ENCODE measurements at regions of chr11 and their contacts with region 1.

Region 1: DNA sequence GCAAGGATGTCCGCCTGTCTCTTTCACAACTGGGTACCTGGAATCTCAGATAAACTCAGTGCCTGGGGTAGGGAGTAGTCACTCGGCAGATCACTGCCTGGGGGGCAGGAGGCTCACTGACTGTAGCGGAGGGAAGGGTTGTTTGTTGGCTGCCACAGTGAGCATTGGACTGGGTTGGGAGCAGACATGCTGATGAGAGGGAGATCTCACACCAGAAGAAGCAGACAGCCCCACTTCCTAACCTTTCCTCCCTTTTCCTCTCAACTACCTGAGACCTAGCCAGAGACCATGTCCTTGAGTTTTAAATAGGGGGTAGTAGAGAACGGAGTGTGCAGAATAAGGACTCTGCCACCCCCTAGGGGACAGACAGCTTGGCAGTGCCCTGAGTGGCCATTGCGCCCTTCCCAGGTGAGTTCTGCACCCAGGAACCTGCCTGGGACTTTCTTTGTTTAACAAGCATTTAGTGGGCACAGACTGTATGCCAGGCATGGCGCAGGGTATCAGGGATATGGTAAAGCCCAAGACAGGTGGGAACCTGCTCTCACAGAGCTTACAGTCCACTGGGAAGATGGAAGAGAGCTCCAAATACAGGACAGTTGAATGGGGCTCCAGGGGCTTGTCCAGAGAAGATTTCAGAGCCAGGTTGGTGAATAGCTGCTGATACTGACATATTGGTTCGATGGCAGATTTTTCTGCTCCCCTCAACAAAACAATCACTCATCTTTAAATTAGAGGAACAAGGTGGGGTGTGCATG is 115.7 kb upstream of the NNMT start:
- DNase-seq: peak; percentile 51
- H3K4me3 ChIP-seq: no peak overlapping the region
- H3K27ac ChIP-seq: no peak overlapping the region
- H3K4me1 ChIP-seq: peaks cover 20% of the 10 kb centered on the region
- H3K27me3 ChIP-seq: no peaks in the 10 kb centered on the region
- CTCF ChIP-seq: peak; percentile 77

Region 2: DNA sequence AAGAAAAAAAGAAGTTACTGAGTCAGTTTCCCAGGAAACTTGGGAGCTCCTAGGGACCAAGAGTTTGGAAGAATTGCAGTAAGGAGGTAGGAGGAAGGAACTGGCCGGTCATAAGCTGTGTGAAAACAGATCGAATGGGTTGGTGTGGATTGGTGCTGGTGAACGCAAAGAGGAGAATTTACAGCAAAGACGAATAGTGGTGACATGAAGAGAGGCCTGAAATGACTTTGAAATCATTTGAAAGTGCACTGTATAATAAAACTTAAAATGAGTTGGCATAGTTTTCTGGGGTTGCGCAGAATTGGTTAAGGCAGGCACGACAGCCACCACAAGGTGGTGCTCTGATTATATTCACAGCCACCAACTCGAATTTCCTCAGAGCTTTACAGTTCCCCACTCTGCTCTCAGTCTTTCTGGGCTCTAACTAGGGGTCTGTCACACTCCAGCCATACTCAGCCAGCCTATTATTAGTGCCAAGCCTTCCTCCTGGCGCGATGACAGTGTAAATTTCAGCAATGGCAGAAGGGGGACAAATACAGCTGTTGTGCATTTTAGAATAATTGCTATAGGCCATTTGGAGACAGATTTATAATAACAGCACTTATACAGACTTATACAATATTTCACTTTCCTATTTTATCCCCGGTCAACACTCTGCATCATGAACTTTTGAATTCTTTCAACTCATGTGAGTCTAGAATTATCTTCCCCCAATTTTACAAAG is 284.2 kb before region 1 on chr11:
- CTCF ChIA-PET with region 1: interaction called, 7 read pairs
- POLR2A ChIA-PET with region 1: interaction called, 3 read pairs
- intact Hi-C with region 1: loop called (anchors 5 kb)
- DNase-seq: peak; percentile 67
- H3K4me3 ChIP-seq: no peak overlapping the region
- H3K27ac ChIP-seq: no peak overlapping the region
- H3K4me1 ChIP-seq: no peaks in the 10 kb centered on the region
- H3K27me3 ChIP-seq: no peaks in the 10 kb centered on the region
- CTCF ChIP-seq: peak; percentile 90

Region 3: GRCh38 chr11:114036156-114036811 is 144.2 kb before region 1 on chr11:
- CTCF ChIA-PET with region 1: no interaction called
- POLR2A ChIA-PET with region 1: no interaction called
- intact Hi-C with region 1: loop called (anchors 5 kb)
- DNase-seq: peak; percentile 66
- H3K4me3 ChIP-seq: peak overlapping the region; percentile 38
- H3K27ac ChIP-seq: no peak overlapping the region
- H3K4me1 ChIP-seq: peaks cover 11% of the 10 kb centered on the region
- H3K27me3 ChIP-seq: no peaks in the 10 kb centered on the region
- CTCF ChIP-seq: peak; percentile 89

Region 4: DNA sequence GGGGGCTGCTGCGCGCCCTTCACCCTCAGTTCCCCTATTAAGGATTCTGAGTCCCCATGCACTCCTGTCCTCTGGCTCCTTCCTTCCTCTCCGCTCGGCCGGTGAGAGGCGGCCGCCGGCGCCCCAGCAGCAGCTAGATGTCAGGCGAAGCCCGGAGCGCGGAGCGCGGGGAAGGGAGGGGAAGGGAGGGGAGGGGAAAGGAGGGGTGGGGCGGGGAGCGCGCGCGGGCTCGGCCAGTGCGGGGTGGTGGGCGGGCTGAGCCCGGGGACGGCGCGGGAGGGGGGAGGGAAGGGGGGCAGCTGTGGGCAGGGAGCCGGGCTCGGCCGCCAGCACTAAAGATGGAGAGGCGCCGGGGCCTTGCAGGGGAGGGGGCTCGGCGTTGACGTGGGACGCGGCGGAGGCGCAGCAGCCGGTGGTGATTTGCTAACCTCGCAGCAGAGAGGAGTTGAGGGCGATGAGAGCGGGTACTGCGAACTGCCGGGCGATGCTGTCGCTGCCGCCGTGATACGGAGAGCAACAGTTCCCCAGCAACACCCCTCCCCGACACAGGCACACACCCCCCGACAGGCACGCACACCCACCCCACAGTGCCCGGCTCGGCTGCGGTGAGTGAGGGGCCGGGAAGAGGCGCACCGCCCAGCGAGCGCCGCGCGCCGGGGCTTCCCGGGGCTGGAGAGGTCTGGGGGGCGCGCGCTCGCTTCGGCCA is 121.0 kb before region 1 on chr11 and contains the start of gene ZBTB16:
- CTCF ChIA-PET with region 1: no interaction called
- POLR2A ChIA-PET with region 1: no interaction called
- intact Hi-C with region 1: no loop called
- DNase-seq: peak; percentile 90
- H3K4me3 ChIP-seq: peak within 1 kb of the TSS; percentile 75
- H3K27ac ChIP-seq: peak within 1 kb of the TSS; percentile 79
- H3K4me1 ChIP-seq: peaks cover 24% of the 10 kb centered on the region
- H3K27me3 ChIP-seq: peaks cover 27% of the 10 kb centered on the region
- CTCF ChIP-seq: peak; percentile 51; the same call in 1 of the 2 replicates
- total RNA-seq, gene ZBTB16: 12.0 and 14.1 TPM in 2 replicates

Region 5: DNA sequence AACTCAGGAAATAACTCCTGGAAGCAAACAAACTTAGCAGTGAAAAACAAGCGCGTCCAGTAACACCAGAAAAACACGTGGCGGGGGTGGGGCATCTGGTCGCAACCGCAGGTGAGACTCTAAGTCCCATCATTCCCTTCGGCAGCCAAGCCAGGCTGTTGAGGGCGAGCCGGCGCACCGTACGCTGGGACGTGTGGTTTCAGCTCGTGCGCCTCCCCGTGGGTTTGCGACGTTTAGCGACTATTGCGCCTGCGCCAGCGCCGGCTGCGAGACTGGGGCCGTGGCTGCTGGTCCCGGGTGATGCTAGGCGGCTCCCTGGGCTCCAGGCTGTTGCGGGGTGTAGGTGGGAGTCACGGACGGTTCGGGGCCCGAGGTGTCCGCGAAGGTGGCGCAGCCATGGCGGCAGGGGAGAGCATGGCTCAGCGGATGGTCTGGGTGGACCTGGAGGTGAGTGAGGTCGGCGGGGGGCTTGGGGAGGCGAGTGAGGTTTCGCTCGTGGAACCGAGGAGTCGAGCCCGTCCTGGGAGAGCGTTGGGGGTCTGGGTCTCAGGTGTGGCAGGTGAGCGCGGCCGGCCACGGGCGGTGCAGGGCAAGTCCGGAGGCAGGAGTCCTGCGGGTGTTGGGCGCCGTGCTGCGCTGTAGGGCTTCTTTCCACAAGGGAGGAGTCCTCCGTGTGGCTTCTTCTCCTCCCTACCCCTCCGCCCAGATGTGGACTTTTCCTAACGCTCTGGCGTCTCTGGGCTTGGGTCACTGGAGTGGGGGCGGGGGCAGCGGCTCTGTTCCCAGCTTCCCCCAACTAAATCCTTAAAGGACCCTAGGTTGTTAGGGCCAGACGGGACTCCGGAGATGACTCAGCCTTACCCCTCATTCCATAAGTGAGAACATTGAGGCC is 259.0 kb after region 1 on chr11 and contains the start of gene REXO2:
- CTCF ChIA-PET with region 1: no interaction called
- POLR2A ChIA-PET with region 1: no interaction called
- intact Hi-C with region 1: no loop called
- DNase-seq: peak; percentile 99
- H3K4me3 ChIP-seq: peak within 1 kb of the TSS; percentile 74
- H3K27ac ChIP-seq: peak within 1 kb of the TSS; percentile 52
- H3K4me1 ChIP-seq: peaks cover 3% of the 10 kb centered on the region
- H3K27me3 ChIP-seq: no peaks in the 10 kb centered on the region
- CTCF ChIP-seq: peak; percentile 8; the same call in 1 of the 2 replicates
- total RNA-seq, gene REXO2: 119 TPM in 2 replicates

Region 6: GRCh38 chr11:114664641-114665040 is 484.2 kb after region 1 on chr11:
- CTCF ChIA-PET with region 1: no interaction called
- POLR2A ChIA-PET with region 1: no interaction called
- intact Hi-C with region 1: no loop called
- DNase-seq: no peak
- H3K4me3 ChIP-seq: no peak overlapping the region
- H3K27ac ChIP-seq: no peak overlapping the region
- H3K4me1 ChIP-seq: no peaks in the 10 kb centered on the region
- H3K27me3 ChIP-seq: no peaks in the 10 kb centered on the region
- CTCF ChIP-seq: no peak

Measured in A673 (cell line).